Breast epithelium (tissue), 4 donors: ENCODE measurements at regions of chrX and their contacts with region 1.

Region 1: DNA sequence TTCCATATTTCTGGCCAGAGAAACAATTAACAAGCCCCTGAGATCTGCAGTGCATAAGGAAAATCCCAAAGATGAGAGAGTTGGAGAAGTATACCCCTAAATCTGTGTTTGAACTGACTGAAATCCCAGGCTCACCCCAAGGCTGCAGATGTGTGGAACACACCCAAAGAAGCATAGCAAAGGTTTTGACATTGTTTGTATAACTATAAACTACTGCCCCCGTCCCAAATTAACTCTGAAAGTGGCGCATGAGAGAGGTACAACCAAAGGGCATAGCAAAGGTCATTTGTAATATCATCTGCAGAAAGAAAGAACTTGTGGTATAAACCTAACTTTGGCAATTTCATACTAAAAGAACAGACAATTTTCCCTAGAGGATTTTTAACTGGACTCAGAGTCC is 157.9 kb downstream of the DCAF12L1 start:
- DNase-seq: no peak
- H3K4me3 ChIP-seq: no peak overlapping the region
- H3K27ac ChIP-seq: no peak overlapping the region
- H3K4me1 ChIP-seq: no peaks in the 10 kb centered on the region
- H3K27me3 ChIP-seq: no peaks in the 10 kb centered on the region
- CTCF ChIP-seq: no peak
- POLR2A ChIP-seq: no peak

Region 2: GRCh38 chrX:126339928-126340327 is 54.8 kb before region 1 on chrX:
- intact Hi-C with region 1: no loop called
- DNase-seq: no peak
- H3K4me3 ChIP-seq: no peak overlapping the region
- H3K27ac ChIP-seq: no peak overlapping the region
- H3K4me1 ChIP-seq: no peaks in the 10 kb centered on the region
- H3K27me3 ChIP-seq: no peaks in the 10 kb centered on the region
- CTCF ChIP-seq: no peak
- POLR2A ChIP-seq: no peak

Region 3: GRCh38 chrX:126799059-126799458 is 404.4 kb after region 1 on chrX:
- intact Hi-C with region 1: loop called (anchors 5 kb)
- DNase-seq: no peak
- H3K4me3 ChIP-seq: no peak overlapping the region
- H3K27ac ChIP-seq: no peak overlapping the region
- H3K4me1 ChIP-seq: no peaks in the 10 kb centered on the region
- H3K27me3 ChIP-seq: no peaks in the 10 kb centered on the region
- CTCF ChIP-seq: no peak
- POLR2A ChIP-seq: no peak